ENCODE measurements at regions of chr4 and their contacts with region 1.

Region 1: DNA sequence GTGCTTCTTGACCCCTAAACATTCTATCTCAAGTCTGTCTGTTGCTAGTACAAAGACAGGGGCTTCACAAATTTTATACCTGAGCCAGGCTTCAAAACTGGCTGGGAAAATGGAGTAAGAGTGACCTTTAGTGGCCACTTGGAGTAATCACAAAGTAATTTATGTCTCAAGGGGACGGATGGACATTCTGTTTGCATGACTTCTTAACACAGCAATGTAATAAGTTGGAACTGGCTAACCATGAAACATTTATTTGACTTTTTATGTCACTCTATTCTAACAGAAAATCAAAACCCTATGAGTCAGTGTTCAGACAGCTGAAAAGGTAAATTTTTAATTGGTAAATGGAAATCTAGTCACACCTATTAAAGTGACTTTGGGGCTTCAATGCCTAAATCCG is 600.6 kb downstream of the ANKRD50 start:
- DNase-seq: no peak
- H3K4me3 ChIP-seq: no peak overlapping the region
- H3K27ac ChIP-seq: no peak overlapping the region
- H3K4me1 ChIP-seq: peaks cover 0 to 13% (median 11%) of the 10 kb centered on the region in 4 donors
- H3K27me3 ChIP-seq: no peaks in the 10 kb centered on the region
- CTCF ChIP-seq: peak; percentile 68 to 79 (median 69)
- EP300 ChIP-seq: no peak
- POLR2A ChIP-seq: no peak

Region 2: GRCh38 chr4:123102897-123103471 is 1008.9 kb before region 1 on chr4:
- intact Hi-C with region 1: loop called (anchors 10 kb)
- DNase-seq: no peak
- H3K4me3 ChIP-seq: no peak overlapping the region
- H3K27ac ChIP-seq: no peak overlapping the region
- H3K4me1 ChIP-seq: peaks cover 0 to 15% (median 9%) of the 10 kb centered on the region in 4 donors
- H3K27me3 ChIP-seq: no peaks in the 10 kb centered on the region
- CTCF ChIP-seq: peak; percentile 73 to 85 (median 78)
- EP300 ChIP-seq: no peak
- POLR2A ChIP-seq: no peak

Region 3: GRCh38 chr4:123127218-123127617 is 984.7 kb before region 1 on chr4:
- intact Hi-C with region 1: loop called (anchors 5 kb)
- DNase-seq: no peak
- H3K4me3 ChIP-seq: no peak overlapping the region
- H3K27ac ChIP-seq: no peak overlapping the region
- H3K4me1 ChIP-seq: peaks cover 0 to 16% (median 2%) of the 10 kb centered on the region in 4 donors
- H3K27me3 ChIP-seq: no peaks in the 10 kb centered on the region
- CTCF ChIP-seq: peak; percentile 29 to 43 (median 41)
- EP300 ChIP-seq: no peak
- POLR2A ChIP-seq: no peak

Region 4: DNA sequence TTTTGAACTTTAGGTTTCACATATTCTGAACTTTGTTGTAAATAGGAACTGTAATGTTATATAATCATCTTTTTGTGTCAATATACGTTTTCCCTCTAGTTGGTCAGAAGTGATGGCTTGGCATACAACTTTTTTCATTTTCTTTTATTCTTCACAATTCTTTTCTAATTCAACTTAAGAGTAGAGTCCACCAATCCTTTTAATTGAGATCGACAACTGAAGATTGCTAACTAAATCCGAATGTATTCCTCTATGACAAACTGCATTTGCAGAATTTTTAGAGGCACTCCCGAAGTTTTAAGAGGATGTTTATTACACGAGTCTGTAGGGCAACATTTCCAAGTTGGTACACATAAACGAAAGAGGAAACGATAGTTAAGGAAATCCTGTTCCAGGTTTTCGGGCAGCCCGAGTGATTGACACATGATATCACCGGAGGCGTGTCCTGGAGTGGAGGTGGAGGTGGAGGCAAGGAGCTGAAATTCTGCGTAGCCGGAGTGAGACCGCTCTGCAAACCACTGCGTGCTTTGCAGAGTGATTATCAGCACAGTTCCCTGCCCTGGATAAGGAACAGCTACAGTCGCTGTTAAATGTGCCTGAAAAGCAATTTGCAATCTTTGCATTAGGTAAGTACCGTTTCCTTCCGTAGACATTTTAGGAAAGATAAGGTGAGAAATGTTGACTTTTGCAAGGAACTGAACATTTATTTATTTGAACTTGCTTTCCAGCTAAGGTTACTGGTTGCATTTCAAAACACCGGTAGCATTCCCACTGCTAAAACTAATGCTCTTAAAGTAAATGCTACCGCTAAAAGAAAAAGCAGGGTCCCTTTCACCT is 715.4 kb before region 1 on chr4 and contains the start of gene SPRY1:
- intact Hi-C with region 1: loop called (anchors 5 kb)
- DNase-seq: peak; percentile 96
- H3K4me3 ChIP-seq: peak within 1 kb of the TSS; percentile 88 to 94 (median 92)
- H3K27ac ChIP-seq: peak within 1 kb of the TSS; percentile 92 to 95 (median 94)
- H3K4me1 ChIP-seq: peaks cover 0 to 24% (median 11%) of the 10 kb centered on the region in 4 donors
- H3K27me3 ChIP-seq: no peaks in the 10 kb centered on the region
- CTCF ChIP-seq: no peak
- EP300 ChIP-seq: no peak
- POLR2A ChIP-seq: peak; percentile 61
- total RNA-seq, gene SPRY1: 103 to 136 (median 136) TPM

Region 5: GRCh38 chr4:123555233-123555806 is 556.6 kb before region 1 on chr4:
- intact Hi-C with region 1: loop called (anchors 10 kb)
- DNase-seq: no peak
- H3K4me3 ChIP-seq: peak overlapping the region in 1 of 4 donors; percentile 19
- H3K27ac ChIP-seq: peak overlapping the region; percentile 61 to 73 (median 68)
- H3K4me1 ChIP-seq: peaks cover 22 to 27% (median 25%) of the 10 kb centered on the region in 4 donors
- H3K27me3 ChIP-seq: no peaks in the 10 kb centered on the region
- CTCF ChIP-seq: no peak
- EP300 ChIP-seq: no peak
- POLR2A ChIP-seq: no peak

Region 6: GRCh38 chr4:123776254-123776653 is 335.7 kb before region 1 on chr4:
- intact Hi-C with region 1: loop called (anchors 2 kb)
- DNase-seq: no peak
- H3K4me3 ChIP-seq: no peak overlapping the region
- H3K27ac ChIP-seq: peak overlapping the region in 1 of 4 donors; percentile 30
- H3K4me1 ChIP-seq: peaks cover 0 to 15% (median 5%) of the 10 kb centered on the region in 4 donors
- H3K27me3 ChIP-seq: no peaks in the 10 kb centered on the region
- CTCF ChIP-seq: no peak
- EP300 ChIP-seq: no peak
- POLR2A ChIP-seq: no peak

Region 7: DNA sequence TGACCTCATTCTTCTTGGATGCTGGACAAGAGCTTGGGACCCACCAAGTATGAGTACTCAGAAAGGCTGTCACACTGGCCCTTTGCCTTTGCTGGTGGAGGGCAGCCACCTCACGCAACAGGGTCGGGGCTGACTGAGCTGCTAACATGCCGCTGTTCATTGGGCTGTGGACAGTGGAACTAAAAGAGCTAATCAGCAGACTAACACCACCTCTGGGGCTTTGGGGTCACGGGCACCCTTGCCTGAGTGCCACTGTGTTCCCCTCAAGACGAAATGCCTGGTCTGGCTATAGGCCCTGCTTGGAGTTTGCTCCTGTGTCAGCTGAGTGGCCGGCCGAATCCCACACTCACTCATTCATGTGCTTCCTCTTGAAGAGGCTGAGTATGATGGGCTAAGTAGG is 155.7 kb before region 1 on chr4:
- intact Hi-C with region 1: no loop called
- DNase-seq: no peak
- H3K4me3 ChIP-seq: no peak overlapping the region
- H3K27ac ChIP-seq: no peak overlapping the region
- H3K4me1 ChIP-seq: no peaks in the 10 kb centered on the region
- H3K27me3 ChIP-seq: no peaks in the 10 kb centered on the region
- CTCF ChIP-seq: no peak
- EP300 ChIP-seq: no peak
- POLR2A ChIP-seq: no peak

Region 8: DNA sequence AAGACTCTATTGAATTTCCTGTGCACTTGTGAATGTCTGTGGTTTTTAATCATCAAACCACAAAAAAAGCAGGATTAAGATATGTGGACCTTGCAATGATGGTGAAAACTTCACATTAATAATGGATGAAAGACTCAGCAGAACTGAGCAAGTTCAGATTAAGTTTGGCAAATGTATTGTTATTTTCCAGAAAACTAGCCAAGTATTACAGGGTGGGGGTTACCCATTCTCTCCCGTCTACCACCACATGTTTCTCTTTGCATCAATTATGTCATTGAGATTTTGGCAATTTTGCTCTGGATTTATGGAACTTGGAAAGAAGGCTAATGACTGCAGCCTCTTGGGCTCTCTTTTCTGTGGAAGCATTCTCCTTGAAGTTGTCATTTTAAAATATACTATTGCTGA is 23.5 kb after region 1 on chr4:
- intact Hi-C with region 1: no loop called
- DNase-seq: no peak
- H3K4me3 ChIP-seq: no peak overlapping the region
- H3K27ac ChIP-seq: no peak overlapping the region
- H3K4me1 ChIP-seq: no peaks in the 10 kb centered on the region
- H3K27me3 ChIP-seq: no peaks in the 10 kb centered on the region
- CTCF ChIP-seq: no peak
- EP300 ChIP-seq: no peak
- POLR2A ChIP-seq: no peak

Region 9: GRCh38 chr4:124262211-124263179 is 150.6 kb after region 1 on chr4:
- intact Hi-C with region 1: loop called (anchors 10 kb)
- DNase-seq: no peak
- H3K4me3 ChIP-seq: no peak overlapping the region
- H3K27ac ChIP-seq: no peak overlapping the region
- H3K4me1 ChIP-seq: peaks cover 0 to 7% (median 0%) of the 10 kb centered on the region in 4 donors
- H3K27me3 ChIP-seq: no peaks in the 10 kb centered on the region
- CTCF ChIP-seq: peak; percentile 76 to 87 (median 78)
- EP300 ChIP-seq: no peak
- POLR2A ChIP-seq: no peak

Measured in esophagus muscularis mucosa (tissue), 4 donors.